ENCODE measurements at regions of chr12 and their contacts with region 1.

Region 1: GRCh38 chr12:24814379-24815113 is 134.4 kb downstream of the BCAT1 start:
- DNase-seq: no peak
- H3K4me3 Mint-ChIP-seq: peak overlapping the region; percentile 54
- H3K27ac Mint-ChIP-seq: peak overlapping the region; percentile 50
- H3K4me1 Mint-ChIP-seq: peaks cover 23% of the 10 kb centered on the region
- H3K27me3 Mint-ChIP-seq: no peaks in the 10 kb centered on the region

Region 2: DNA sequence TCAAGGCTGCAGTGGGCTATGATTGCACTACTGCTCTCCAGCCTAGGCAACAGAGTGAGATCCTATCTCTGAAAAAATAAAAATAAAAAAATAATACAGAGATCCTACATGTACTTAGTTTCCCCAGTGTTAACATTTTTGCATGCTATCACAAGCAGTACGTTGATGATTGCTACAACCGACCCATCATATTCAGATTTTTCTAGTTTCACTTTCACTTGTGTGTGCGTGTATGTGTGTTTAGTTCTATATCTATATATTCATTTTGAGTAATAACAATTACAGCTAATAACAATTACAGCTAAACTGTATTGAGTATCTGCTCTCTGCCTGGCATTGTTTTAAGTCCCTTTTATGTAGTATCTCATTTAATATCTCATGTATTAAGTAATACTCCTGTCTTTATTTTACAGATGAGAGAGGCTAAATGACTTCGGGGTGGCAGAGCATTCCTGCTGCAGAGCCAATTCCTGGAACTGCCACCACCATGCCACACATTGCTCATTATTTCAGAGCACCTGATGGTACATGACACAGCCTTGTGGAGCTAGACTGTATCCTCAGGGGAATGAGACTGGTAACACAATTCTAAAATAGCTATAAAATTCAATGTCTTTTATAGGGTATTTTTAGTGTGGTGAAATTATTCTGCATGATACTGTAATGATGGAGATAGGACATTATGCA is 18.7 kb before region 1 on chr12:
- CTCF ChIA-PET with region 1: interaction called, 4 read pairs
- POLR2A ChIA-PET with region 1: interaction called, 4 read pairs
- intact Hi-C with region 1: loop called (anchors 2 kb)
- DNase-seq: peak; percentile 31
- H3K4me3 Mint-ChIP-seq: peak overlapping the region; percentile 66
- H3K27ac Mint-ChIP-seq: no peak overlapping the region
- H3K4me1 Mint-ChIP-seq: peaks cover 38% of the 10 kb centered on the region
- H3K27me3 Mint-ChIP-seq: no peaks in the 10 kb centered on the region